ENCODE measurements at regions of chr2 and their contacts with region 1.

Region 1: GRCh38 chr2:162301151-162301804 is 17.2 kb downstream of the IFIH1 start:
- DNase-seq: peak; percentile 76
- H3K4me3 Mint-ChIP-seq: no peak overlapping the region
- H3K27ac Mint-ChIP-seq: no peak overlapping the region
- H3K4me1 Mint-ChIP-seq: no peaks in the 10 kb centered on the region
- H3K27me3 Mint-ChIP-seq: no peaks in the 10 kb centered on the region
- CTCF ChIP-seq: peak; percentile 65

Region 2: DNA sequence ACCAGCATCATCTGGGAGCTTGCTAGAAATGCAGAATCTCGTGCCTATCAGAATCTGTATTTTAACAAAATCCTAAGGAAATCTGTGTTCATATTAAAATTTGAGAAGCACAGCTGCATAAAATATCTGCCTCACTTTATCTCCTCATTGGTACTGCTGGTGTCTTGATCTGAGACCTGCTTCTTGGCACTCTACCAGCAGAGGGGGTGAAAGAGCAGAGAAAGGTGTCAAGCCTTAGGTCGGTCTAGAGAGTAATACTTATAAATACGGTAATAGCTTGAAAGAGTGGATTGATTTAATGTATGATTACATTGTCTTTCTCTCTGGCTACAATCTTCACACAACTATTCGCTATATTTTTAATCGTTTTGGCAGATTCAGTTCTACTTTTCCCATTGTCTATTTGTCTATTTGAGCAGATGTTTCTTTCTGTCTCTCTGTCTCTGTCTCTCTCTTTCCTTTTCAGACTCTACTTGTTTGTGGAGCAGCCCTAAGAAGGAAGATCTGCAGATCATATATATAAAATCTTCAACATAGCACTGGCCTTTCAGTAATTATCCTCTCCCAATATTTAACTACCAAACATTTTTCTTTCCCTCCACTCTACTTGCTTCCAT is 147.6 kb before region 1 on chr2:
- CTCF ChIA-PET with region 1: interaction called, 253 read pairs
- POLR2A ChIA-PET with region 1: interaction called, 4 read pairs
- intact Hi-C with region 1: loop called (anchors 1 kb)
- DNase-seq: peak; percentile 87
- H3K4me3 Mint-ChIP-seq: no peak overlapping the region
- H3K27ac Mint-ChIP-seq: no peak overlapping the region
- H3K4me1 Mint-ChIP-seq: peaks cover 7% of the 10 kb centered on the region
- H3K27me3 Mint-ChIP-seq: peaks cover 34% of the 10 kb centered on the region
- CTCF ChIP-seq: peak; percentile 55

Region 3: DNA sequence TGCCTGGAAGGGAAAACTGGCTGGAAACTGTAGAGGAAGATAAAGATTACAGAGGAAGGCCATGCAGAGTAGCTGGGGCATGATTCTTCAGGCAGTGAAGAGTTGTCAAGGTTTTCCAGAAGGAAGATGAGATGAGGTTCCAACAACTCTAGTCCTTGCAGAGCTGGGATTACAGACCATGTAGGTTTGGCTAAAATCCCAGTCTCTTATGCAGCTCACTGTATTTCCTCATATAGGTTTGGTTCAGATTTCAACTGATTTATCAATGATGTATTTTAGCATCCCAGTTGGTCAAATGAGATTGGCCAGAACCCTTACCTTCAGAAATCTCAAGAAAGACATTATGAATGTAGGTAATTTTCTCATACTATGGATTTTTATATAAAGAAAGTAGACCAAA is 74.4 kb before region 1 on chr2:
- CTCF ChIA-PET with region 1: interaction called, 639 read pairs
- POLR2A ChIA-PET with region 1: interaction called, 21 read pairs
- intact Hi-C with region 1: no loop called
- DNase-seq: no peak
- H3K4me3 Mint-ChIP-seq: no peak overlapping the region
- H3K27ac Mint-ChIP-seq: peak overlapping the region; percentile 64
- H3K4me1 Mint-ChIP-seq: peaks cover 11% of the 10 kb centered on the region
- H3K27me3 Mint-ChIP-seq: no peaks in the 10 kb centered on the region
- CTCF ChIP-seq: no peak

Region 4: DNA sequence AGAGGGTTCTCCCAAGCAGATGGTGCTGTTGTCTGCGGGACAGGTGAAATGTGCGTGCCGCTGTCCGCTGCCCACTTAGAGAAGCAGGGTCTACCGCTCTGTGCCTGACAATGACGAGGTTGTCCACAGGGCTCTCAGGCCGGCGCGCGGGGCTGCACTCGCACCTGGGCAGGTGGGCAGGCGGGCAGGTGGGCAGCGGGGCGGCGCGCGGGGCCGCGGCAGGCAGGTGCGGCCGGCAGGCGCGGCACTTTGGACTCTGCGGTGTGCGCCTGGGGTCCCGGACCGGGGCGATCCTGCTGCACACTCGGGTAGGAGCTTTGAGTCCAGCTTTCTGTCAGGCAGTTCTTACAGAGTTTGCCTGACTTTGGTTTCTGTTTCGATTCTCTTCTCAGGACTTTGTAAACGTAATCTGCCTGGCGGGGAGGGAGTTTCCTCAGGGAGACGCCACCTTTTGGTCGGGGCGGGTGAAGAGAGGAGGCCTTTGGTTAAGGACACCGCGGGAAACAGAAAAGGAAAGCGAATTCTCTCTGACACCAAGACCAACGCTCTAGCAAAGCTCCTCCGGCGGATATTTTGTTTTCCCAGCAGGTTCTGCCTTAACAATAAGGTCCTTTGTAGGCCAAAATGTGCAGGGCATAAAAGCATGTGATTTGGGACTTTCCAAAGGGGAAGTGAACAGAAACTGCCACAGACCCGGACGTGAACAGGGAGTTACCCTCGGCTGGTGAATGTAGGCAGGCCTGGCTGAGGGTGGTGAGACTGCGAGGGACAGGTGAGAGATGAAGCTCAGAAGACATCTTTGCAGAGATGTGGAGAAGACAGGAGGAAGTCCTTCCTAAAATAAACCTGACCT is 17.3 kb after region 1 on chr2 and contains the start of gene IFIH1:
- CTCF ChIA-PET with region 1: interaction called, 19 read pairs
- POLR2A ChIA-PET with region 1: interaction called, 5 read pairs
- intact Hi-C with region 1: no loop called
- DNase-seq: peak; percentile 94
- H3K4me3 Mint-ChIP-seq: peak within 1 kb of the TSS; percentile 86
- H3K27ac Mint-ChIP-seq: peak within 1 kb of the TSS; percentile 99
- H3K4me1 Mint-ChIP-seq: peaks cover 19% of the 10 kb centered on the region
- H3K27me3 Mint-ChIP-seq: no peaks in the 10 kb centered on the region
- CTCF ChIP-seq: peak; percentile 18
- total RNA-seq, gene IFIH1: 4.5 and 7.2 TPM in 2 replicates

Region 5: DNA sequence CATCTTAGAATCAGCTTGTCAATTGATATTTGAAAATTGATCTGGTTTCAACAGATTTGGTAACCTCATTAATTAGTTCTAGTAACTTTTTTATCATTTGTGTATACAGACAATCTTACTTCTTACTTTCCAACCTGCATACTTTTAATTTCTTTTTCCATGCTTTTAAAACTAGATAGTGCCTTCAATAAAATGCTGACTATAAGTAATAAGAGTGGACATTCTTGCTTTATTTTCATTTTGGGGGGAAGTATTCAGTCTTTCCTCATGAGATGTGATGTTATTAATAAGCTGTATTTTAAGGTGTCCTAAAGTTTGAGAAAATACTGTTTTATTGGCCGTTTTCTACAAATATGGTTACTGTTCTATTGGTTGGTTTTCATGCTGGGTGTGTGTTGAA is 428.2 kb after region 1 on chr2:
- CTCF ChIA-PET with region 1: no interaction called
- POLR2A ChIA-PET with region 1: no interaction called
- intact Hi-C with region 1: no loop called
- DNase-seq: no peak
- H3K4me3 Mint-ChIP-seq: no peak overlapping the region
- H3K27ac Mint-ChIP-seq: no peak overlapping the region
- H3K4me1 Mint-ChIP-seq: no peaks in the 10 kb centered on the region
- H3K27me3 Mint-ChIP-seq: peaks cover 34% of the 10 kb centered on the region
- CTCF ChIP-seq: no peak

Measured in MCF 10A (cell line).